SK-N-SH (cell line): ENCODE measurements at regions of chr4 and their contacts with region 1.

Region 1: DNA sequence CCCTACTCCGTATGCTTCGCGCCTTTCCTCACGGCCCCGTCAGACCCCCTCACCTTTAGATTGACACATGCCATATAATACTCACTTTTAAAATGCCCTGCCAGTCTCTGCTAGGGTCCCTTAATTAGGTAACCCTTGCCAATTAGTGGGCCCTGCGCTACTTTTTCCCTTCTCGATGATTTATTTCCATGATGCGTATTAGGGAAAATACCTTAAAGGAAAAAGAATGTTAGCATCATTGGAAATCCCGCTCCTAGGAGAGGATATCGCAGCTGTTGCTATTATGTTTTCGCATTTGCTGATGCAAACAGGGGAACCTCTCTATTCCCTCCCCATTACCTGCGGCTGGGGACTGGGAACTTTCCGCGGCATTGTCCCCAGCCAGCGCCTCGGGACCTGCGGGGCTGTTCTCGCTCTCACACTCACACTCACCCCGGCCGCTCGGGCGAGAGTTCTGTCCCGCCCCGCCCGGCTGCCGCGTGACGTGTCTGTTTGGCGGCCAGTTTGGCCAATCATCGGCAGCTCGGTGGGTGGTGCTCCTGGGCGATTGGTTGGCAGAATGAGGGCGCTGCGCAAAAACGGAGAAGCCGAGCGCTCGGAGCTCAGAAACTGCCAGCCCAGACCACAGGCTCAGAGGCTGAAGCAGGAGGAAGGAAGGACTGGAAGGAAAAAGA is at the start of gene PCDH10:
- DNase-seq: peak; percentile 95
- H3K4me3 ChIP-seq: peak within 1 kb of the TSS; percentile 47 to 59
- H3K27ac ChIP-seq: no peak within 1 kb of the TSS
- H3K4me1 ChIP-seq: peaks cover 0 to 18% of the 10 kb centered on the region in 2 experiments; a peak in 2 of 4 replicates
- H3K27me3 ChIP-seq: peaks cover 74% of the 10 kb centered on the region
- CTCF ChIP-seq: no peak
- EP300 ChIP-seq: no peak
- RAD21 ChIP-seq: no peak
- polyA plus RNA-seq, gene PCDH10: 0.02 and 0.05 TPM in 2 replicates

Region 2: GRCh38 chr4:132992686-132993085 is 156.1 kb before region 1 on chr4:
- CTCF ChIA-PET with region 1: no interaction called
- POLR2A ChIA-PET with region 1: no interaction called
- DNase-seq: no peak
- H3K4me3 ChIP-seq: no peak overlapping the region
- H3K27ac ChIP-seq: no peak overlapping the region
- H3K4me1 ChIP-seq: no peaks in the 10 kb centered on the region
- H3K27me3 ChIP-seq: no peaks in the 10 kb centered on the region
- CTCF ChIP-seq: no peak
- EP300 ChIP-seq: no peak
- RAD21 ChIP-seq: no peak

Region 3: DNA sequence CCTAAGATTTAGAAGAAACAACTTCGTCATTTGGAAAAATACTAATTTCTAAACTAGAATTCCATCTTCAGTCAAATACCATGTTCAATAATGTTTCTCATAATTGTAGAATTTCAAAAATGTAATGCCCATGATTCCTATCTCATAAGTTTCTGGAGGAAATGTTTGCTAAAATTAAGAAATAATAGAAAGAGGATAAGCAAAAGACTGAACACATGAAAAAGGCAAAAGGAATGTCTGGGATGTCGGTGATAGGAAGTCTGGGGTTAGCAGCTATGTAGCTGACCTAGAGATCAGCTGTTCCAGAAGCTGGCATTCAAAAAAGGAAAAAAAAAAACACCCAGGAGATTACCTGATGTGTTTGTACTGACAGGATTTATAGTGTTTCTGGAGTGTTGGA is 18.7 kb before region 1 on chr4:
- CTCF ChIA-PET with region 1: interaction called, 20 read pairs
- POLR2A ChIA-PET with region 1: no interaction called
- DNase-seq: no peak
- H3K4me3 ChIP-seq: no peak overlapping the region
- H3K27ac ChIP-seq: peak overlapping the region in 1 of 2 experiments; percentile 34; a peak in 1 of 4 replicates
- H3K4me1 ChIP-seq: no peaks in the 10 kb centered on the region; a peak in 1 of 4 replicates
- H3K27me3 ChIP-seq: no peaks in the 10 kb centered on the region
- CTCF ChIP-seq: no peak
- EP300 ChIP-seq: no peak
- RAD21 ChIP-seq: no peak

Region 4: DNA sequence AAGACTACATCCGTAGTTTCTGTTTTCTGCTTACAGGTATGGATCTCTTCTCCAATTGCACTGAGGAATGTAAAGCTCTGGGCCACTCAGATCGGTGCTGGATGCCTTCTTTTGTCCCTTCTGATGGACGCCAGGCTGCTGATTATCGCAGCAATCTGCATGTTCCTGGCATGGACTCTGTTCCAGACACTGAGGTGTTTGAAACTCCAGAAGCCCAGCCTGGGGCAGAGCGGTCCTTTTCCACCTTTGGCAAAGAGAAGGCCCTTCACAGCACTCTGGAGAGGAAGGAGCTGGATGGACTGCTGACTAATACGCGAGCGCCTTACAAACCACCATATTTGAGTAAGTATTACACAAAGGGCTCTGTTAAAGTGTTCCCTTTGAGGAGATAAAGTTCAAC is 14.1 kb after region 1 on chr4:
- CTCF ChIA-PET with region 1: interaction called, 44 read pairs
- POLR2A ChIA-PET with region 1: no interaction called
- DNase-seq: no peak
- H3K4me3 ChIP-seq: no peak overlapping the region
- H3K27ac ChIP-seq: no peak overlapping the region
- H3K4me1 ChIP-seq: no peaks in the 10 kb centered on the region; a peak in 1 of 4 replicates
- H3K27me3 ChIP-seq: peaks cover 5% of the 10 kb centered on the region; the same call in 1 of the 2 replicates
- CTCF ChIP-seq: no peak
- EP300 ChIP-seq: no peak
- RAD21 ChIP-seq: no peak

Region 5: GRCh38 chr4:133178956-133179355 is 30.1 kb after region 1 on chr4:
- CTCF ChIA-PET with region 1: interaction called, 10 read pairs
- POLR2A ChIA-PET with region 1: no interaction called
- DNase-seq: no peak
- H3K4me3 ChIP-seq: no peak overlapping the region
- H3K27ac ChIP-seq: peak overlapping the region in 1 of 2 experiments; percentile 60; a peak in 1 of 4 replicates
- H3K4me1 ChIP-seq: no peaks in the 10 kb centered on the region; a peak in 1 of 4 replicates
- H3K27me3 ChIP-seq: no peaks in the 10 kb centered on the region; the same call in 1 of the 2 replicates
- CTCF ChIP-seq: no peak
- EP300 ChIP-seq: no peak
- RAD21 ChIP-seq: no peak

Region 6: GRCh38 chr4:133237705-133238104 is 88.9 kb after region 1 on chr4:
- CTCF ChIA-PET with region 1: no interaction called
- POLR2A ChIA-PET with region 1: no interaction called
- DNase-seq: no peak
- H3K4me3 ChIP-seq: no peak overlapping the region
- H3K27ac ChIP-seq: no peak overlapping the region
- H3K4me1 ChIP-seq: no peaks in the 10 kb centered on the region
- H3K27me3 ChIP-seq: no peaks in the 10 kb centered on the region; the same call in 1 of the 2 replicates
- CTCF ChIP-seq: no peak
- EP300 ChIP-seq: no peak
- RAD21 ChIP-seq: no peak

Region 7: DNA sequence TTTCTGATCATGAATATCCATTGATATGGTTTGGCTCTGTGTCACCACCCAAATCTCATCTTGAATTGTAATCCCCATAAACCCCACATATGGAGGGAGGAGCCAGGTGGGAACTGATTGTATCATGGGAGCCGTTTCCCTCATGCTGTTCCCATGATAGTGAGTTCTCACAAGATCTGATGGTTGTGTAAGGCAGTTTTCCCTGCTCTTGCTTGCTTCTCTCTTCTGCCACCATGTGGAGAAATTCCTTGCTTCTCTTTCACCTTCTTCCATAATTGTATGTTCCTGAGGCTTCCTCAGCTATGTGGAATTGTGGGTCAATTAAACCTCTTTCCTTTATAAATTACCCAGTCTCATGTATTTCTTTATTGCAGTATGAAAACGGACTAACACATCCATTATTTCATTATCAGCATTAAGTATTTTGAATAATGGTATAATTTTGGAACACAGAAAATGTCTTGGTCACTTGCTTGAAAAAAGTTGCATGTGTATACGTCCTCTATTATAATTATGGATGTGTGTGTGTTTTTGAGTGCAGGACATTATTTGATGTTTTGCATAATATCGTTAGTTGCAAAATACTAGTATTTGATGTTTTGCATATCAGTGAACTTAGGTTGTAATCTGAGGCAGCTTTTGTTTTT is 334.9 kb after region 1 on chr4:
- CTCF ChIA-PET with region 1: interaction called, 10 read pairs
- POLR2A ChIA-PET with region 1: no interaction called
- DNase-seq: no peak
- H3K4me3 ChIP-seq: no peak overlapping the region
- H3K27ac ChIP-seq: no peak overlapping the region
- H3K4me1 ChIP-seq: no peaks in the 10 kb centered on the region; a peak in 1 of 4 replicates
- H3K27me3 ChIP-seq: no peaks in the 10 kb centered on the region
- CTCF ChIP-seq: peak; percentile 55
- EP300 ChIP-seq: no peak
- RAD21 ChIP-seq: peak; percentile 46